PC-9 (cell line): ENCODE measurements at regions of chr6 and their contacts with region 1.

Region 1: GRCh38 chr6:30061092-30061857 is at the start of gene POLR1H:
- DNase-seq: peak; percentile 88 to 90
- H3K4me3 ChIP-seq: peak within 1 kb of the TSS; percentile 95
- H3K27ac ChIP-seq: peak within 1 kb of the TSS; percentile 35; the same call in 1 of the 2 replicates
- H3K4me1 ChIP-seq: peaks cover 24% of the 10 kb centered on the region
- H3K27me3 ChIP-seq: no peaks in the 10 kb centered on the region
- CTCF ChIP-seq: no peak
- total RNA-seq, gene POLR1H: 33.3 and 37.6 TPM in 2 replicates

Region 2: DNA sequence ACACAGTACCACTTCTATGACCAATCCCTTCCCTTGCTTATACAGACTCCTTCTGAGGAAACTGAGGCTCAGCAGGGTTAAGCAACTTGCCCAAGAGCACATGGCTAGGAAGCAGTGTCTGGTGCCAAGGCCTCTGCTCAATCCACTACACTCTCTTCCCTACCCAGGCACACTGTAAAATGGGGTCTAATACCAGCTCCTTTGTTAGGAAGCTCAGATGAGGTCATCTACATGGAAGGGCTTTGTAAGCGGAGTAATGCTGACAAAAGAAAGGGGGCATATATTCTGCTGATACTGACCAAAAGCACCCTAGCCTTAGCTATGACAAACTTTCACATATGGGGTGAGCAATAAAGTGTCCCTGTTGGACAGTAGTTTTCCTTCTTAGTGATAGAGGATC is 142.8 kb after region 1 on chr6:
- CTCF ChIA-PET with region 1: no interaction called
- POLR2A ChIA-PET with region 1: interaction called, 10 read pairs
- intact Hi-C with region 1: no loop called
- DNase-seq: no peak
- H3K4me3 ChIP-seq: no peak overlapping the region
- H3K27ac ChIP-seq: no peak overlapping the region
- H3K4me1 ChIP-seq: peaks cover 22% of the 10 kb centered on the region
- H3K27me3 ChIP-seq: no peaks in the 10 kb centered on the region
- CTCF ChIP-seq: no peak

Region 3: GRCh38 chr6:30219244-30219643 is 158.0 kb after region 1 on chr6:
- CTCF ChIA-PET with region 1: no interaction called
- POLR2A ChIA-PET with region 1: no interaction called
- intact Hi-C with region 1: no loop called
- DNase-seq: peak; percentile 59 to 63
- H3K4me3 ChIP-seq: no peak overlapping the region
- H3K27ac ChIP-seq: no peak overlapping the region
- H3K4me1 ChIP-seq: no peaks in the 10 kb centered on the region
- H3K27me3 ChIP-seq: no peaks in the 10 kb centered on the region
- CTCF ChIP-seq: peak; percentile 76